ENCODE measurements at regions of chr9 and their contacts with region 1.

Region 1: DNA sequence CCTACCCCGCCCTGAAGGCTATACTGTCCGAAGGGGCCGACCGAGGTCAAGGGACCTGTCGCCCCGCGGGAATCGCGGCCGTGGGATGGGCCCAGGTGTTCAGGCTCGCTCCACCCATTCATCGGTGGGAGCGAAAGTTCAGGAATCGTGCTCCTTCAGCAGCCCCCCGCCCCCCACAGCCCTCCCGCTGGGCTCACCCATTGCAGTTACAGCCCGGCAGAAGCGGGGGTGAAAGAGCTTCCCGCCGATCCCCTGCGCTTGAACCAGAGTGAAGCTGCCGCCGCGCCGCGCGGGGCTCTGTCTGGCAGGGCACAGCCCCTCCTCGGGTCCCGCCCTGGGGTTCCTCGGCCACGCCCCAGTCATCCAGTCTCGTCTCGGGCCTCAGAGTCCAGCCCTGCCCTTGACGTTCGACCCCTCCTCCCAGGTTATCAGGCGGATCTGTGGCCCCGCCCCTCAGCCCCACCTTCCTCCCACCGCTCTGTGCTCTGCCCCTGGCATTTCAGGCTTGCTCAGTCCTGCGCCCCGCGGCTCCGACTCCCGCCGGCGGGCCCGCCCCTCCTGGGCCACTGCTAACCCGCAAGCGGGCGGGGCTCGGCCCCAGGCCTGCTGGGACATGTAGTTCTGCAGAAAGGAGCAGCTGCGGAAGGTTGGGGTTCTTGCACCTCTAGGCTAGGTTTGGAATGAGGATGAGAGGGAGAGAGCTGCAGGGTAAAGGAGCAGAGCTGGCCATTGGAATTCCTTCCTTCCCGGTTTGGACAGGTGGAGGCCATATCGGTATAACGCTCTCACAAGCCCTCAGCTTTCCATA is at the start of gene MYORG:
- DNase-seq: peak; percentile 97
- ATAC-seq: peak; percentile 86
- total RNA-seq, gene MYORG: 9.0 TPM

Region 2: GRCh38 chr9:34332076-34332964 is 44.5 kb before region 1 on chr9:
- intact Hi-C with region 1: loop called (anchors 1 kb)
- DNase-seq: no peak
- ATAC-seq: no peak

Region 3: GRCh38 chr9:34343090-34343489 is 33.7 kb before region 1 on chr9:
- intact Hi-C with region 1: loop called (anchors 2 kb)
- DNase-seq: peak; percentile 77
- ATAC-seq: peak; percentile 84

Region 4: GRCh38 chr9:34591248-34591916 is 214.6 kb after region 1 on chr9:
- intact Hi-C with region 1: no loop called
- DNase-seq: peak; percentile 93
- ATAC-seq: peak; percentile 74

Measured in Right ventricle myocardium inferior (tissue), 1 donor.